PC-3 (cell line): ENCODE measurements at regions of chr6 and their contacts with region 1.

Region 1: DNA sequence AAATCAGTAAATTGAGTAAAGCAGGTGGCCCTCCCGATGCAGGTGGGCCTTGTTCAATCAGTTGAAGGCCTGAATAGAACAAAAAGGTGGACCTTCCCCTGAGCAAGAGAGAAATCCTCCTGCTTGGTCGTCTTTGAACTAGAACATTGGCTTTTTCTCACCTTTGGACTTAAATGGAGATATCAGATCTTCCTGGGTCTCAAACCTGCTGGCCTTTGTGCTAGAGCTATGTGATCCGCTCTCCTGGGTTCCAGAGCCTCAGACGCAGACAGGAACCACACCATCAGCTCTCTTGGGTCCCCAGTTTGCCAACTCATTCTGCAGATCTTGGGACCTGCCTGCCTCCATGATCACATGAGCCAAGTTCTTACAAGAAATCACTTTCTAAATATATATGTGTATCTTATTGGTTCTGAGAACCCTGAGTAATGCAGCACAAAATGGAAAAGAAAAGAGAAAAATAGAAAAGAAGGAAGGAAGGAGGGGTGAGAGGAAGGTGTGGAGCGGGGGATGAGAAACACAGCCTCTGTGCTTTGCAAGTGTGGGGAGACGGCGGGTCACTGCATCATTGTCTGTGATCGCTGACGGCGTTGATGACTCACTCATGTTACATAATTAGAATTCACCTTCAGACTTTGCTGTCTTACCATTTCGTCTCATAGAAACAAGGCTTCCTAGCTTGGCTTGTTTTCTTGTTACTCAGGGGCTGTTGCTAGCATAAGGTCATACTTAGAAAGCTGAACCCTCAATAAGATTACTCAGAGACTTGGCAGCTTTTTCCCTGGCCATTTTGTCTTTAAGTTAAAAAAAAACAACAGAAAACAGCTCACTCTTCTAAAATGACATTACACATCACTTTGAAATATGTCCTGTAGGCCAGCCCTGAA is 85.7 kb upstream of the NEDD9 start:
- DNase-seq: peak; percentile 98
- ATAC-seq: peak; percentile 61
- H3K4me3 ChIP-seq: no peak overlapping the region
- H3K27ac ChIP-seq: peak overlapping the region; percentile 89
- H3K4me1 ChIP-seq: peaks cover 62% of the 10 kb centered on the region
- H3K27me3 ChIP-seq: no peaks in the 10 kb centered on the region
- CTCF ChIP-seq: no peak

Region 2: GRCh38 chr6:10800829-10801535 is 517.1 kb before region 1 on chr6:
- CTCF ChIA-PET with region 1: no interaction called
- POLR2A ChIA-PET with region 1: no interaction called
- intact Hi-C with region 1: no loop called
- DNase-seq: peak; percentile 82
- ATAC-seq: peak; percentile 99
- H3K4me3 ChIP-seq: no peak overlapping the region
- H3K27ac ChIP-seq: no peak overlapping the region
- H3K4me1 ChIP-seq: peaks cover 9% of the 10 kb centered on the region
- H3K27me3 ChIP-seq: no peaks in the 10 kb centered on the region
- CTCF ChIP-seq: peak; percentile 99

Region 3: DNA sequence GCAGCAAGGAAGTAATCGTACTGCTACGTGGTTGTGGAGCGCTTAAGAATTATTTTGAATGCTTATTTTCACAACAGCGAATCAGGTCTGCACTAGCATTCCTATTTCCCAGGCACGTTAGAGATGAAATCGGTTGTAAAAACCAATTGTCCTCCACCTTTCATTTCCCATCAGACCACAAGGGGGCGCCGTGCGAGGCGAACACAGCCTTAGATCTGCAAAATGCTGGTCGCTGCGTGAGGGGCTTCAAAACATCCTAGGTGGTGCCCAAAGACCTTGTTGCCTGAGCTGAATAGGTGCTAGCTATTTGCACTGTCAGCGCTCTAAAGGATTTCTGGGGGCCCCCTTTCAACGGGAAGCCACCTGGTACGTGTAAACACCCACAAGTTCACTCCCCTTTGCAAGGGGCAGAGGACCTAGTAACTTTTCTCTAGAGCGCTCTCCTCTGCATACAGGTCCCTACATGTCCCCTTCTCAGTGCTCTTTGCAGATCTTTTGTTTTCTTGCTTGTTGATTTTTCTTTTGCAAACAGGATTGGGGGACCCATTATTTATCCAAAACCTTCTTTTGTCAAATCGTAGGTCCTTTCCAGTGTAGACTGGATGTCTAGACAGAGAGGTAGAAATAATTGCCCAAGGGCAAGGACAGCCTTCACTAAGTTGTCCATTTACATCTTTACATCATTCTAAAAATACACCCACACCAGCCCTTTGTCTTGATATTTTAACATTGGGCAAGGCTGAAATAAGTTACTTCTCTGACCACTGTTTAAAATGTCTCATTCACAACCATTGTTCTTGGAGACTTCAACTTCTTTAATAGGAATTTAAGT is 145.4 kb before region 1 on chr6:
- CTCF ChIA-PET with region 1: no interaction called
- POLR2A ChIA-PET with region 1: no interaction called
- intact Hi-C with region 1: loop called (anchors 5 kb)
- DNase-seq: peak; percentile 71
- ATAC-seq: peak; percentile 59
- H3K4me3 ChIP-seq: no peak overlapping the region
- H3K27ac ChIP-seq: no peak overlapping the region
- H3K4me1 ChIP-seq: no peaks in the 10 kb centered on the region
- H3K27me3 ChIP-seq: no peaks in the 10 kb centered on the region
- CTCF ChIP-seq: peak; percentile 93

Region 4: GRCh38 chr6:11251541-11252360 is 66.4 kb before region 1 on chr6:
- CTCF ChIA-PET with region 1: no interaction called
- POLR2A ChIA-PET with region 1: no interaction called
- intact Hi-C with region 1: loop called (anchors 5 kb)
- DNase-seq: peak; percentile 86
- ATAC-seq: peak; percentile 63
- H3K4me3 ChIP-seq: no peak overlapping the region
- H3K27ac ChIP-seq: peak overlapping the region; percentile 74
- H3K4me1 ChIP-seq: peaks cover 39% of the 10 kb centered on the region
- H3K27me3 ChIP-seq: no peaks in the 10 kb centered on the region
- CTCF ChIP-seq: no peak

Region 5: DNA sequence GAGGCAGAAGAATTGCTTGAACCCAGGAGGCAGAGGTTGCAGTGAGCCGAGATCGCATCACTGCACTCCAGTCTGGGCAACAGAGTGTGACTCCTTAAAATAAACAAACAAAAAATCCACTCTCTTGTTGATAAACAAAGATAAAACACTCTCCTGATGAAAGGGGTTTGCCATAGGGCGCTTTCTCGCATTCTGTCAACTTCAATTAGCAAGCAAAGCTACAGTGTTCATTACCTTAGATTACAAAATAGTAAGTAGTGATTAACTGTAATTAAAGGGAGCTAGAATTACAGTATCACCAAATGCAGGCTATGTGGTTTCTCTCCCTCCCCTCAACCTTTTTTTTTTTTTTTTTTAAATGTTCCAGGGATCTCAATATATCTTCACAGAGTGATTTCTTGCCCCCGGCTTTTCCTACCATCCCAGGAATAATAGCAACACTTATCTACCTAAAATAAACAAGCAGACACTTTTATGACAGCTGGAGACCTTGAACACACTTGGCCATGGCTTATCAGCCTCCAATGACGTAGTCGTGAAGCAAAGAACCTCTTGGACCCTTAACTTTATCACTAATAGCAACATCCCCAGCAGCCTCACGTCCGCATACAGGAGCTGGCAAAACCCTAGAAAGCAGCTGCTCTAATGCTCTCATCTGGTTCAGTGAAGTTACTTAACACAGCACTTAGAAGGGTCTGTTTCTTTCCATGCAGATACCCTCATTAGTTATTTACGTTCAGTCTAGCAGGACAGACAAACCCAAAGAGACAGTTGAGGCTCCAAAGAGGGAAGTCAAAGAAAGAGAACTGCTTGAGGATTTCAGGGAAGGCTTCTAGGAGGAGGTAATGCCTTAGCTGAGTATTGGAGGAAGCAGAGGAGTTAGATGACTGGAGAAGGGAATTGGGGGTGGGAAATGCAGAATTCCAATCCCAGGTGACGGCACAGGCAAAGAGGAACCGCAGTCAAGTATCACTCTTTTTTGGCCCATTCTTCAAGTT is 47.8 kb before region 1 on chr6:
- CTCF ChIA-PET with region 1: no interaction called
- POLR2A ChIA-PET with region 1: no interaction called
- intact Hi-C with region 1: loop called (anchors 5 kb)
- DNase-seq: no peak
- ATAC-seq: no peak
- H3K4me3 ChIP-seq: no peak overlapping the region
- H3K27ac ChIP-seq: no peak overlapping the region
- H3K4me1 ChIP-seq: peaks cover 28% of the 10 kb centered on the region
- H3K27me3 ChIP-seq: no peaks in the 10 kb centered on the region
- CTCF ChIP-seq: no peak

Region 6: DNA sequence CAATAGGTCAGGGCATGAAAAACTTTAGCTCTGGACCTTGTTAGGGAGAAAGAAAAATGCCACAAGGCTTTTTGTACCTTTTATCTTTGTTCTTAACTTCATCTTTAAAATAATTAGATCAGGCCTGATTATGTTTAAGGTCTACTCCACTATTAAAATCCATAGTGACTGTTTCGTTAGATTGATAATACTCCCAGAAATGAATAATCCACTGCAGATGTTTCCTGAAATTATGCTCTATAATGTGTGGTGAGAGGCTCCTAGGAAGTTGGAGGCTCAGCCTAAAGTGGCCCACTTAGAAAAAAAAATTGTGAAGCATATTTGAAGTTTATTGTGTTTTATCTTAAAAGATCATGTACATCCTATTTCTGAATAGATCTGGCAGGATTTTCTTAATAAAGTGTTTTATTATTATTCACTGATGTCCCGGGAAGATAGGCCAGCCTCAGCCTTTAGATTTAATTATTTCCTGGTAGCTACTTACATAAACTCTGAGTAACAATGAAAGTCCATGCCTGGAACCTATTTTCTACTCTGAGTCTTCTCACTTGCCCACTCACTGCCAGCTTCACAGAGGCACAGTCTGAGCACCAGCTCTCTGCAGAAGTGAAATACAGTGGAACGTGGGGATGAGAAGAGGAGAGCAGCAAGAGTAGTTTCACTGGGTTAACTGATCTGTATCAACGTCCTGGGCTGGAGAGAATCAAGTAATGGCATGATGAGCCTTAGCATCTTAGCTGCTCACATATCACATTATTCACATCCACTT is 92.6 kb after region 1 on chr6:
- CTCF ChIA-PET with region 1: no interaction called
- POLR2A ChIA-PET with region 1: interaction called, 12 read pairs
- intact Hi-C with region 1: no loop called
- DNase-seq: no peak
- ATAC-seq: peak; percentile 20
- H3K4me3 ChIP-seq: no peak overlapping the region
- H3K27ac ChIP-seq: no peak overlapping the region
- H3K4me1 ChIP-seq: peaks cover 18% of the 10 kb centered on the region
- H3K27me3 ChIP-seq: no peaks in the 10 kb centered on the region
- CTCF ChIP-seq: no peak

Region 7: DNA sequence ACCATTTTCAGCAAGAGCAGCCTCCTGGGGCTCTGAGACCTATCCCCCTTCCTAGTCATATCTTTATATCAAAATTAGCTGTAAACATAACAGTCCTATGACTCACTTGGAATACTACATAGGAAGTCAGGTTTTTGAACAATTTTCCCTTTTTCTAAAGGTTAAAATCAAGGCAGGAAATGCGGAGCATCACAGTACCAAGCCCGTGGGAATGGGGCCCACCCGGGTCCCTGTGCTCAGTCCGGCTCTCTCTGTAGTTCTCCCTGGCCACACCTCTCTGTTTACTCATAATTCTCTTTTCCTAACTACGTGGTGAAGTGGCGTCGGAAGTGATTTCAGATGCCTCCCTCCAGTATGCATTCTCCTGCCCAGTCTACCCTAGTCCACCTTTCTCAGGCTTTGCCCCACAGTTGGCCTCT is 109.7 kb after region 1 on chr6:
- CTCF ChIA-PET with region 1: no interaction called
- POLR2A ChIA-PET with region 1: interaction called, 4 read pairs
- intact Hi-C with region 1: loop called (anchors 2 kb)
- DNase-seq: peak; percentile 69
- ATAC-seq: peak; percentile 49
- H3K4me3 ChIP-seq: no peak overlapping the region; the same call in 1 of the 2 replicates
- H3K27ac ChIP-seq: peak overlapping the region; percentile 80
- H3K4me1 ChIP-seq: peaks cover 80% of the 10 kb centered on the region
- H3K27me3 ChIP-seq: no peaks in the 10 kb centered on the region
- CTCF ChIP-seq: no peak